ENCODE measurements at regions of chr12 and their contacts with region 1.

Region 1: GRCh38 chr12:11202811-11203210 is 16.1 kb upstream of the TAS2R42 start:
- DNase-seq: no peak
- ATAC-seq: no peak
- H3K4me3 ChIP-seq: no peak overlapping the region
- H3K27ac ChIP-seq: no peak overlapping the region
- H3K4me1 ChIP-seq: no peaks in the 10 kb centered on the region
- H3K27me3 ChIP-seq: no peaks in the 10 kb centered on the region
- CTCF ChIP-seq: no peak
- POLR2A ChIP-seq: no peak

Region 2: GRCh38 chr12:10771132-10771733 is 431.6 kb before region 1 on chr12:
- intact Hi-C with region 1: loop called in 1 of 2 experiments (anchors 5 kb)
- DNase-seq: no peak
- ATAC-seq: peak; percentile 56 to 69 (median 64)
- H3K4me3 ChIP-seq: no peak overlapping the region
- H3K27ac ChIP-seq: no peak overlapping the region
- H3K4me1 ChIP-seq: no peaks in the 10 kb centered on the region
- H3K27me3 ChIP-seq: no peaks in the 10 kb centered on the region
- CTCF ChIP-seq: peak; percentile 56 to 81 (median 61)
- POLR2A ChIP-seq: no peak

Region 3: DNA sequence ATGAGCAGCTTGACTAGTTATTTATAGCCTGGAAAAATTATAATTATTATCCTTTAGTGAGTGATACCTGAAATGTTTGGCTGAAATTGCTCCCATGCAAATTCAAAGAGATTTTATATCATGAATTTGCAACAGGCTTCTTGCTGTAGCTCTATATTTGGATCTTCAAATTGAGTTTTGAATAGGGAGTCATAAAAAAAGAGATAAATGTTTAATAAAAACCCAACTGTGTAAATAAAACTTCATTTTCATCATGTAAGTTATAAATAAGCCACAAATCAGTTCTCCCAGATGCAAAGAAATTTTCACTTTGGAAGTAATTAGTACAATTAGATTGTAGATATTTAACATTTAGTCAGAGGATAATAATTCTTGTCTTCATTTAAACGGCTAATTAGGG is 395.6 kb before region 1 on chr12 and contains the start of gene TAS2R8:
- intact Hi-C with region 1: no loop called
- DNase-seq: no peak
- ATAC-seq: no peak
- H3K4me3 ChIP-seq: no peak within 1 kb of the TSS
- H3K27ac ChIP-seq: no peak within 1 kb of the TSS
- H3K4me1 ChIP-seq: no peaks in the 10 kb centered on the region
- H3K27me3 ChIP-seq: no peaks in the 10 kb centered on the region
- CTCF ChIP-seq: no peak
- POLR2A ChIP-seq: no peak
- total RNA-seq, gene TAS2R8: not detected

Measured in right lobe of liver (tissue), 6 donors.